ENCODE measurements at regions of chr16 and their contacts with region 1.

Region 1: GRCh38 chr16:4350787-4351659 is at the start of gene PAM16:
- DNase-seq: peak; percentile 95 to 99 (median 98)
- ATAC-seq: peak; percentile 93
- H3K4me3 ChIP-seq: peak within 1 kb of the TSS; percentile 91
- H3K4me3 Mint-ChIP-seq: peak within 1 kb of the TSS; percentile 90 to 98 (median 94)
- H3K27ac ChIP-seq: peak within 1 kb of the TSS; percentile 87
- H3K27ac Mint-ChIP-seq: peak within 1 kb of the TSS; percentile 76 to 95 (median 92)
- H3K4me1 ChIP-seq: peaks cover 5 to 7% of the 10 kb centered on the region in 2 donors
- H3K4me1 Mint-ChIP-seq: peaks cover 11 to 38% (median 32%) of the 10 kb centered on the region in 7 donors
- H3K27me3 ChIP-seq: no peaks in the 10 kb centered on the region
- H3K27me3 Mint-ChIP-seq: no peaks in the 10 kb centered on the region
- total RNA-seq, gene PAM16: 34.1 to 46.2 (median 45.0) TPM

Region 2: GRCh38 chr16:4271176-4272066 is 79.6 kb before region 1 on chr16:
- CTCF ChIA-PET with region 1: no interaction called
- POLR2A ChIA-PET with region 1: interaction called, 8 read pairs
- intact Hi-C with region 1: loop called in 1 of 2 experiments (anchors 1 kb)
- DNase-seq: peak; percentile 68 to 90 (median 84)
- ATAC-seq: peak; percentile 89
- H3K4me3 ChIP-seq: peak overlapping the region; percentile 99
- H3K4me3 Mint-ChIP-seq: peak overlapping the region; percentile 85 to 97 (median 92)
- H3K27ac ChIP-seq: peak overlapping the region; percentile 58
- H3K27ac Mint-ChIP-seq: peak overlapping the region; percentile 67 to 98 (median 83)
- H3K4me1 ChIP-seq: peaks cover 5 to 13% of the 10 kb centered on the region in 2 donors
- H3K4me1 Mint-ChIP-seq: peaks cover 8 to 23% (median 15%) of the 10 kb centered on the region in 7 donors
- H3K27me3 ChIP-seq: no peaks in the 10 kb centered on the region
- H3K27me3 Mint-ChIP-seq: no peaks in the 10 kb centered on the region

Region 3: DNA sequence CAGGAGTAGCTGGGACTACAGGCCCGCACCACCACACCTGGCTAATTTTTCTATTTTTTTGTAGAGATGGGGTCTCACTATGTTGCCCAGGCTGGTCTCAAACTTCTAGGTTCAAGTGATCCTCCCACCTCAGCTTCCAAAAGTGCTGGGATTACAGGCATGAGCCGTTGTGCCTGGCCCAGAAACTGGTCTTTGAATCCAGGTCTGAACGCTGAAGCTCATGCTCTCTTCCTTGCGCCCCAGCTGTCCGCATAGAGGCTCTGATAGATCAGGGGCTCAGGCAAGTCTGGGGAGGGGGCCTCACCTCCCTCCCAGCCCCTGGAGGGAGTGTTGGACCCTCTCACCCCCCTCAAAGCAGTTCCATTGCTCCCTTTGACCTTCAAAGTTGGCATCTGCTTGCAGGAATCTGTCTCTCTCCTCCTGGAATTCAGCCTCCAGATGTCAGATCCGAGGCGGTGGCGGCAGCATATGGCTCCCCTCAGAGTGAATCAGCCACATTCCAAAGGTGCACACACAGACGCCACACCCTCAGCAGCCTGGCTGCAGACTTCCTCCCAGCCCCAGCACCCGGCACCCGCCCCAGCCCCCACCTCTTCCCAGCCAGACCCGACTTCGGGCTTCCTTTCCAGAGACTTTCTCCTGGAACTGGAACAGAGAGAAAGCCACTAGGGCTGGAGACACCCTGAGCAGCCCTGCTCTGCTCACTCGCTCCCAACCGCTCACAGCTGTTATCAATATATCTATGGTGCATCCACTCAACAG is 52.1 kb before region 1 on chr16:
- CTCF ChIA-PET with region 1: no interaction called
- POLR2A ChIA-PET with region 1: no interaction called
- intact Hi-C with region 1: no loop called
- DNase-seq: no peak
- ATAC-seq: no peak
- H3K4me3 ChIP-seq: no peak overlapping the region
- H3K4me3 Mint-ChIP-seq: no peak overlapping the region
- H3K27ac ChIP-seq: no peak overlapping the region
- H3K27ac Mint-ChIP-seq: peak overlapping the region in 2 of 9 donors; percentile 11 to 38
- H3K4me1 ChIP-seq: no peaks in the 10 kb centered on the region
- H3K4me1 Mint-ChIP-seq: peaks cover 1 to 13% (median 8%) of the 10 kb centered on the region in 7 donors
- H3K27me3 ChIP-seq: no peaks in the 10 kb centered on the region
- H3K27me3 Mint-ChIP-seq: no peaks in the 10 kb centered on the region

Region 4: DNA sequence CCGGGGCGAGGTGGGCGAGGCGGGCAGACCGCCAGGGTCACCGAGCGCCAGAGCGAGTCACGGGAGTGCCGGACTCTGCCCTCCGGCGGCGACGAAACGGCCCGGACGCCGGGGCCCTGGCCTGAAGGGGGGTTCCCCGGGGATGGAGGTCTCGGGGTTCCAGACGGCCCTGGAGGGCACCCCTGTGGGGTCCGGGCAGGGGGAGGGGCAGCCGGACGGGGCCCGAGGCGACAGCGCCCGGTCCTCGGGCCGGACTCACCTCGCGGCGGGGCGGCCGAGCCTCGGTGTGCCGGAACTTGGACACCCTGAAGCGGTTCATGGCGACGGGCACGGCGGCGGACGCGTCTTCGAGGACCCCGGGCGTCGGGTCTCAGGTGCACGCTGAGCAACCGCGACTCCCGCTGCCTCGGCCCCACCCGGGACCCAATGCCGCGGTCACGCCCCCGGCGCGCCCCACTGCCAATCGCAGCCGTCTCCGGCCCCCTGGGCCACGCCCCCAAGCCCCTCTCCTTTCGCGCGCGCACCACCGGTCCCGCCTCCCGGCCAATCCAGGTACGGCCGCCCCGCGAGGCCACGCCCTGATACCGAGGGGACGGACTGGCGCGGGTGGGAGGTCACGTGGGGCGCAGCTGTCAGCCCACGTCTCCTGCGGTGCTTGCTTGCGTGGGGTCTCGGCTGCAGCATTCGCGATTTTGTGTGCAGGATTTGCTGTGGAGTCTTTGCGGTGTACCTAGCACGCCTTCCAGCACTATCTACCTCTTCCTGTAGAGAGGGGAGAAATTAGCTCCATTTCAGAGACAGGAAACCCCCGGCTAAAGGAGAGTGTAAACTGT is 65.4 kb after region 1 on chr16 and contains the start of gene CORO7:
- CTCF ChIA-PET with region 1: no interaction called
- POLR2A ChIA-PET with region 1: interaction called, 3 read pairs
- intact Hi-C with region 1: loop called (anchors 1 to 2 kb)
- DNase-seq: peak; percentile 98 to 100 (median 99)
- ATAC-seq: peak; percentile 89
- H3K4me3 ChIP-seq: peak within 1 kb of the TSS; percentile 71
- H3K4me3 Mint-ChIP-seq: peak within 1 kb of the TSS; percentile 88 to 98 (median 95)
- H3K27ac ChIP-seq: peak within 1 kb of the TSS; percentile 98
- H3K27ac Mint-ChIP-seq: peak within 1 kb of the TSS; percentile 91 to 99 (median 98)
- H3K4me1 ChIP-seq: peaks cover 26 to 33% of the 10 kb centered on the region in 2 donors
- H3K4me1 Mint-ChIP-seq: peaks cover 18 to 43% (median 38%) of the 10 kb centered on the region in 7 donors
- H3K27me3 ChIP-seq: no peaks in the 10 kb centered on the region
- H3K27me3 Mint-ChIP-seq: peaks cover 0 to 9% (median 0%) of the 10 kb centered on the region in 5 donors
- total RNA-seq, gene CORO7: 114 to 572 (median 165) TPM

Region 5: DNA sequence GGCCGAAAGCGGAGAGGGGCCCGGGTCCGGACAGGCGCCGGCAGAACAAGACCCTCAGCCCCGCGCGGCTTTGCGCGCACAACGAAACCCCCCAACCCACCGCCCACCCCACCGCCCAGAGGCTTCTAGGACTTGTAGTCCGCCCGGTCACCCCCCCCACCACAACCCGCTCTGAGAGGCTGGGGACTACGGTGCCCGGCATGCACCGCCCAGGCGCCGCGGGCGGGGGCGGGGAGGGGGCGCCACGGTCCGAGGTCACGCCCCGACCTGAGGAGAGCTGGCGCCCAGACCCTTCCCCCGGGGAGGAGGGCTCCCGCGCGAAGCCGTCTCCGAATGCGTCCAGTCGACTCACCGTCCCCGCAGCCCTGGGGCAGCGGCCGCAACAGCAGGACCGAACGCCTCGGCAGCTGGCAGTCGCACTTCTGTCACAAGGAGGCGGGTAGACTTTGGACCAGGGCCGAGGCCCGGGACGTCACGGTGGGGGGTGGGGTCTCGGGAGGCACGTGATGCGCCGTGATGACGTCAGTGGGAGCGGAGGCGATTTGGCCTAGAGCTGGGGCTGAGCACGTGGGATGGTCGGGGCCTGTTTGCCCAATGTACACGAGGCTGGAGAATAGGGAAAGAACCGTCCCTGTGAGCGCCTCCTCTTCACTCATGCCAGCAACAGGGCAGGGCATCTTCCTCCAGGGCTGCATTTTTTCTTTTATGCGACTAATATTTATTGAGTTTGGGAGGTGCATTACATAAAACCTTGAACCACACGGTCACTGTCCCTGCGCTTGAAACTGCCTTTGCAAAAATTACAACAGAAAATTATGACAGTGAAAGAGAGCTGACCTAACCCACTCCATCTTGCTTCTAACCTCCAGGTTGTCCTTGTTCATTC is 187.6 kb after region 1 on chr16 and contains the start of gene CDIP1:
- CTCF ChIA-PET with region 1: no interaction called
- POLR2A ChIA-PET with region 1: no interaction called
- intact Hi-C with region 1: loop called in 1 of 2 experiments (anchors 5 kb)
- DNase-seq: peak; percentile 85 to 93 (median 90)
- ATAC-seq: peak; percentile 92
- H3K4me3 ChIP-seq: peak within 1 kb of the TSS; percentile 81
- H3K4me3 Mint-ChIP-seq: peak within 1 kb of the TSS; percentile 66 to 91 (median 82)
- H3K27ac ChIP-seq: peak within 1 kb of the TSS; percentile 96
- H3K27ac Mint-ChIP-seq: peak within 1 kb of the TSS; percentile 78 to 97 (median 92)
- H3K4me1 ChIP-seq: peaks cover 10 to 33% of the 10 kb centered on the region in 2 donors
- H3K4me1 Mint-ChIP-seq: peaks cover 24 to 44% (median 40%) of the 10 kb centered on the region in 7 donors
- H3K27me3 ChIP-seq: no peaks in the 10 kb centered on the region
- H3K27me3 Mint-ChIP-seq: peaks cover 0 to 9% (median 0%) of the 10 kb centered on the region in 5 donors
- total RNA-seq, gene CDIP1: 28.1 to 41.1 (median 31.0) TPM

Region 6: DNA sequence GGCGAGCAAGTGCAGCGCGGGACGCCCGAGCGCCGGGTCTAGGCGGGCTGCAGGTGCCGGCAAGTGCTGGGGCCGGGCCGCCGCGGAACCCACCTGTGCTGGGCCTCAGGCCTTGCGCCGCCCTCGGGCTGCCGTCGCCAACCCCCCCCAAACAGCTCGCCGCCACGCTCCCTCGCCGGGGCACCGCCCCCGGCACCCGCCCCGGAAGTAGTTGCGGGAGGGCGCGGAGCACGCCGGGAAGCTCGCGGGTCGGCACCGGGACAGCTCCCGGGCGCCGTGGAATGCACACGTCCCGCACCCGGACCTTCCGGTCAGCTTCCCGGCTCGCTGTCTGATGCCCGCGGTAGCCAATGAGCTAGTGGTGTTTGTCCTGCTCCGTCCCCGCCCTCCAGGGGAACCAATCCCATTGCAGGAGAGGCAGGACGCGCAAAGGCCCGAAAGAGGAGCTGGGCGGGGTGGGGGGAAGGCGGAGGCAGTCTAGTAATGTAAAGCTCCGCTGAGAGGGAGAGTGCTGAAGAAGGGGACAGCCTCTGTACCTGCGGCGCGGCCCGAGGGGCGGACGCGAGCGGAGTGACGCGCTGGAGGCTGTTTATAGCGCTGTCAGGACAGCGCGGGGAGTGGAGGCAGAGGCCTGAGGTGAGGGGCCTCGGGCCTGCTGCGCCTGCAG is 383.2 kb after region 1 on chr16 and contains the starts of genes ANKS3 and DNAAF8:
- CTCF ChIA-PET with region 1: no interaction called
- POLR2A ChIA-PET with region 1: no interaction called
- intact Hi-C with region 1: loop called in 1 of 2 experiments (anchors 10 kb)
- DNase-seq: peak; percentile 72 to 90 (median 79)
- ATAC-seq: peak; percentile 86
- H3K4me3 ChIP-seq: peak within 1 kb of the TSS; percentile 98
- H3K4me3 Mint-ChIP-seq: peak within 1 kb of the TSS; percentile 84 to 96 (median 92)
- H3K27ac ChIP-seq: peak within 1 kb of the TSS; percentile 79
- H3K27ac Mint-ChIP-seq: peak within 1 kb of the TSS; percentile 73 to 92 (median 90)
- H3K4me1 ChIP-seq: peaks cover 6 to 9% of the 10 kb centered on the region in 2 donors
- H3K4me1 Mint-ChIP-seq: peaks cover 9 to 32% (median 20%) of the 10 kb centered on the region in 7 donors
- H3K27me3 ChIP-seq: no peaks in the 10 kb centered on the region
- H3K27me3 Mint-ChIP-seq: peaks cover 0 to 3% (median 0%) of the 10 kb centered on the region in 5 donors
- total RNA-seq, gene ANKS3: 17.6 to 32.7 (median 25.3) TPM
- total RNA-seq, gene DNAAF8: 0.11 to 0.57 (median 0.27) TPM